Ascending aorta (tissue), 2 donors: ENCODE measurements at regions of chr11 and their contacts with region 1.

Region 1: GRCh38 chr11:124194698-124195410 is 11.7 kb downstream of the OR10D3 start:
- DNase-seq: peak; percentile 40 to 80
- H3K4me3 ChIP-seq: peak overlapping the region in 1 of 2 donors; percentile 51
- H3K27ac ChIP-seq: peak overlapping the region; percentile 73 to 79
- H3K4me1 ChIP-seq: peaks cover 0 to 5% of the 10 kb centered on the region in 2 donors
- H3K27me3 ChIP-seq: no peaks in the 10 kb centered on the region
- CTCF ChIP-seq: peak; percentile 61 to 80 (median 65)

Region 2: GRCh38 chr11:124114942-124115781 is 79.7 kb before region 1 on chr11 and contains the start of gene VWA5A:
- intact Hi-C with region 1: loop called (anchors 2 kb)
- DNase-seq: peak; percentile 44 to 92
- H3K4me3 ChIP-seq: peak within 1 kb of the TSS; percentile 49 to 72
- H3K27ac ChIP-seq: peak within 1 kb of the TSS; percentile 57 to 61
- H3K4me1 ChIP-seq: peaks cover 0 to 6% of the 10 kb centered on the region in 2 donors
- H3K27me3 ChIP-seq: no peaks in the 10 kb centered on the region
- CTCF ChIP-seq: no peak
- total RNA-seq, gene VWA5A: 7.6 TPM

Region 3: GRCh38 chr11:124159481-124159880 is 35.4 kb before region 1 on chr11:
- intact Hi-C with region 1: loop called (anchors 5 kb)
- DNase-seq: no peak
- H3K4me3 ChIP-seq: no peak overlapping the region
- H3K27ac ChIP-seq: no peak overlapping the region
- H3K4me1 ChIP-seq: no peaks in the 10 kb centered on the region
- H3K27me3 ChIP-seq: no peaks in the 10 kb centered on the region
- CTCF ChIP-seq: no peak

Region 4: GRCh38 chr11:124346556-124346955 is 151.7 kb after region 1 on chr11:
- intact Hi-C with region 1: no loop called
- DNase-seq: no peak
- H3K4me3 ChIP-seq: no peak overlapping the region
- H3K27ac ChIP-seq: no peak overlapping the region
- H3K4me1 ChIP-seq: no peaks in the 10 kb centered on the region
- H3K27me3 ChIP-seq: no peaks in the 10 kb centered on the region
- CTCF ChIP-seq: no peak